BJ (cell line): ENCODE measurements at regions of chr5 and their contacts with region 1.

Region 1: GRCh38 chr5:112174959-112175594 is 244.0 kb downstream of the EPB41L4A start:
- DNase-seq: no peak
- H3K4me3 ChIP-seq: no peak overlapping the region
- H3K27me3 ChIP-seq: no peaks in the 10 kb centered on the region
- CTCF ChIP-seq: peak; percentile 66

Region 2: GRCh38 chr5:112160652-112161391 is 14.3 kb before region 1 on chr5:
- CTCF ChIA-PET with region 1: interaction called, 58 read pairs
- POLR2A ChIA-PET with region 1: no interaction called
- DNase-seq: peak; percentile 26
- H3K4me3 ChIP-seq: peak overlapping the region; percentile 77
- H3K27me3 ChIP-seq: no peaks in the 10 kb centered on the region
- CTCF ChIP-seq: peak; percentile 99

Region 3: DNA sequence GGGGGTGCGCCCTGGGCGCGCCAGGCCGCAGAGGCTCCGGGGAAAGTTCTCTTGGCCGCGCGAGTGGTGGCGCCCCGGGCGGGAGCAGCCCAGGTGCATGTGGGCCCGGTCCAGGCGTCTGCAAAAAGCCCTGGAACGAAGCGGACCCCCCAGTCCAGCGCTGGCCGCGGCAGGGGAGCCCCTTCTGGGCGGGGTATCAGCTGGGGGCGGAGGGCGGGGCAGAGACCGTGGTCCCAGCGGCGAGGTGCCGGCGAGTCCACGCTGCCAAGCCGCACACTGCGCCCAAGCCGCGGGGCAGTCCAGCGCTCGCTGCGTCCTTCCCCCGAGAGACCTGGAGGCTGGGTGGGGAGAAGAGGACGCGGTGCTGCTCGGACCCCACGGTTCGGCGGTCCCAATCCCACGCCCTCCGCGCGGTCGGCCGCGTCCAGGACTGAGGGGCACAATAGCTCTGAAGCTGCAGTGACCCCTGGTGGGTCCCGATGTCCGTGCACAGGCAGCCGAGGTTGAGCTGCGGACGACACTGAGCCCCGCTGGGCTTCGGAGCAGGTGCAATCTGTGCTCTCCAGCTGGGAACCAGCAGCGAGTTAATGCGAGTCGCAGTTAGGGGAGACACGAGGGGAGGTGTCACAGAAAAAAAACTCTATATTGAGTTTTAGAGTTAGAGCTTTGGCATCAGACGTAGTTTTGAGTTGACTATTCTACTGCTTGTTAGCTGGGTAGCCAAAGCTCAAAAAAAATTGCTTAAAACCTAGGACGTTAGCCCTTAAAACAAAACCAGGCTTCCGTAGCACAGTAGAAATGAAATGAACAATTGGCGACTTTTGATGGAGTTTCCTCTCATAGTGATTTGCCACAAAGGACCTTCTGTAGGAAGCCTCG is 245.1 kb after region 1 on chr5:
- CTCF ChIA-PET with region 1: interaction called, 22 read pairs
- POLR2A ChIA-PET with region 1: no interaction called
- DNase-seq: no peak
- H3K4me3 ChIP-seq: peak overlapping the region; percentile 32
- H3K27me3 ChIP-seq: peaks cover 23% of the 10 kb centered on the region
- CTCF ChIP-seq: peak; percentile 71